Activated B cell treated with CpG ODN at 0.5 μM for 24 hours (primary cell): ENCODE measurements at regions of chr1 and their contacts with region 1.

Region 1: DNA sequence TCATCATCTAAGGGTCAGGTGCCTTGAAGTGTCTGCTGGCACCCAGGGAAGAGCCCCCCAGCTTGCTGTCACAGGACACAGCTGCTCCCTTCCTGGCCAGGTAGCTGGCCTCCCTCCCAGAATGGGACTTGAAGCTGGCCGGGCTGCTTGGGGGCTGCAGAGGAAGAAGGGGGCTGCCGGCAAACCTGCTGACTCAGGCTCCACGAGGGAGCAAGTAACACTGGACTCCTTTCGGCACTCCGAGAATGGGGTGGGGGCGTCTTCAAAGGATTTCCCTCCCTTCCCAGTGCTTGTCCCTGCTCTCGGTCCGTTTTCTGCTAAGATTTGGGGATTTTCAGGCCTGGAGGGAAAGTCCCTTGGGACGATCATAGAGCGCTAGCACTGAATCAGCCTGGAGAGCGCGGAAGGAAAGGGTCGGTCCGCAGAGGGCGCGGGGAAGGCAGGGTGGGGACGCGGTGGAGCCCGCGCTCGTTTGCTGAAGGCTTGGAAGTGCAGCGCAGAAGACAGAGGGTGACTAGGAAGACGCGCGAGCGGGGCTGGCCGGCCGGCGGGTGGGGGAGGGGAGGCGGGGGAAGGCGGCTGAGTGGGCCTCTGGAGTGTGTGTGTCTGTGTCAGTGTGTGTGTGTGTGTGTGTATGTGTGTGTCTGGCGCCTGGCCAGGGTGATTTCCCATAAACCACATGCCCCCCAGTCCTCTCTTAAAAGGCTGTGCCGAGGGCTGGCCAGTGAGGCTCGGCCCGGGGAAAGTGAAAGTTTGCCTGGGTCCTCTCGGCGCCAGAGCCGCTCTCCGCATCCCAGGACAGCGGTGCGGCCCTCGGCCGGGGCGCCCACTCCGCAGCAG is at the start of gene CSF1:
- DNase-seq: peak; percentile 40
- ATAC-seq: peak; percentile 23
- H3K4me3 Mint-ChIP-seq: peak within 1 kb of the TSS; percentile 85
- H3K27ac Mint-ChIP-seq: peak within 1 kb of the TSS; percentile 51
- H3K4me1 Mint-ChIP-seq: peaks cover 37% of the 10 kb centered on the region
- H3K27me3 Mint-ChIP-seq: peaks cover 38% of the 10 kb centered on the region
- CTCF ChIP-seq: no peak
- total RNA-seq, gene CSF1: 1.9 and 2.0 TPM in 2 replicates

Region 2: DNA sequence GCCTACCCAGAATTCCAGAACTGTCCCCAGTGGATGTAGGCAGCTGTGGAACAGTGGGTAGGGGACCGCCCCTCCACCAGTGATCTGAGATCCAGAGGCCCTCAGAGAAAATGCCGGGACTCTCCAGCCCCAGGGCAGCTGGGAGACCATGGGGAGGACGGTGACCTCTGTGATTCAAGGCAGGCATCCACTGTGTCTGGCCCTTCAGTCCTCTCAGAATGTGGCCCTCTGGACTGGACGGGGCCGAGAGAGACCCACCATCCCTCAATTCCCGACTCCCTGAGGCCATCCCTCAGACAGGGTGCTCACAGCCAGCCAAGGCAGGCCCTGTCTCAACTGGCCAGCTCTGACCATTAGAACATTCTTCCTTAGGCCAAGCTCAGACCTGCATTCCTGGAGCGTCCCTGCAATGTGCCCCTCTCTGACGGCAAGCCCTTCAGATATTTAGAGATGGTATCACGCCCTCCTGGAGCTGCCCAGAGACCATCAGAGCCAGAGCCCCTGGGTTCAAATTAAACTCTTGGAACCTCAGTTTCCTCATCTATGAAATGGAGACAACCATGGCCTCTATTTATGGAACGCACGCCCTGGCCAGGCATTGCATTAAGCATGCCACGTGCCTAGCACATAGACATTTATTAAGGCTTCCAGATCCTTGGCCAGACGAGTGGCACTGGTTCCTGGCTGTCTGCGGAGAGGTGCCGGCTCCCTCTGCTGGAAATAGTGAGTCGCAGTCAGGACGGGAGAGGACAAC is 137.0 kb before region 1 on chr1:
- CTCF ChIA-PET with region 1: interaction called, 3 read pairs
- POLR2A ChIA-PET with region 1: no interaction called
- intact Hi-C with region 1: loop called (anchors 2 kb)
- DNase-seq: peak; percentile 37
- ATAC-seq: peak; percentile 81
- H3K4me3 Mint-ChIP-seq: no peak overlapping the region
- H3K27ac Mint-ChIP-seq: no peak overlapping the region
- H3K4me1 Mint-ChIP-seq: peaks cover 3% of the 10 kb centered on the region
- H3K27me3 Mint-ChIP-seq: peaks cover 12% of the 10 kb centered on the region
- CTCF ChIP-seq: no peak

Region 3: GRCh38 chr1:109796484-109797302 is 113.7 kb before region 1 on chr1:
- CTCF ChIA-PET with region 1: no interaction called
- POLR2A ChIA-PET with region 1: no interaction called
- intact Hi-C with region 1: no loop called
- DNase-seq: no peak
- ATAC-seq: no peak
- H3K4me3 Mint-ChIP-seq: no peak overlapping the region
- H3K27ac Mint-ChIP-seq: no peak overlapping the region
- H3K4me1 Mint-ChIP-seq: no peaks in the 10 kb centered on the region
- H3K27me3 Mint-ChIP-seq: peaks cover 7% of the 10 kb centered on the region
- CTCF ChIP-seq: no peak

Region 4: GRCh38 chr1:109816175-109816811 is 94.0 kb before region 1 on chr1:
- CTCF ChIA-PET with region 1: no interaction called
- POLR2A ChIA-PET with region 1: no interaction called
- intact Hi-C with region 1: loop called (anchors 1 kb)
- DNase-seq: no peak
- ATAC-seq: peak; percentile 98
- H3K4me3 Mint-ChIP-seq: peak overlapping the region; percentile 52
- H3K27ac Mint-ChIP-seq: peak overlapping the region; percentile 73
- H3K4me1 Mint-ChIP-seq: peaks cover 44% of the 10 kb centered on the region
- H3K27me3 Mint-ChIP-seq: no peaks in the 10 kb centered on the region
- CTCF ChIP-seq: no peak

Region 5: DNA sequence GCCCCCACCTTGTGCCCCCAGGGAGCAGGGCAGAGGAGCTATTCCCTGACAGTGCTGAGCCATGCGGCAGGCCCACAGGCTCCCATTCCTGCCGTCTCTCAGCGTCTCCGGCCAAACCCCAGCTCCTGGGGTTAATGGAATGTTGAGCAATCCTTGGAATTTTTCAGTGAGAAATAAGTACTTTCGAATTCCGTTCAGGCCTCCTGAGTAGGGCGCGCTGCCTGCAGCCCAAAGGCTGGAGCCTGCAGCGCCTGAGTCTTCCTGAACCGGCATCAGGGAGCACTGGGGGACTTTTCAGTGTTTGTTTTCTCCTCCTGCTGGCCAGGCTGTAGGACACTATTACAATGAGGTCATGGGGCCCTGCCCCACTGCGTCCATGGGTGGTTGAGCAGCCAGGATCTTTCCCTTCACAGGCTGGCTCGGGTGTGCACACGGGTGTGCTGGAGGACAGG is 33.0 kb before region 1 on chr1:
- CTCF ChIA-PET with region 1: no interaction called
- POLR2A ChIA-PET with region 1: no interaction called
- intact Hi-C with region 1: loop called (anchors 5 kb)
- DNase-seq: no peak
- ATAC-seq: peak; percentile 48
- H3K4me3 Mint-ChIP-seq: peak overlapping the region; percentile 46
- H3K27ac Mint-ChIP-seq: no peak overlapping the region
- H3K4me1 Mint-ChIP-seq: peaks cover 22% of the 10 kb centered on the region
- H3K27me3 Mint-ChIP-seq: peaks cover 19% of the 10 kb centered on the region
- CTCF ChIP-seq: no peak

Region 6: DNA sequence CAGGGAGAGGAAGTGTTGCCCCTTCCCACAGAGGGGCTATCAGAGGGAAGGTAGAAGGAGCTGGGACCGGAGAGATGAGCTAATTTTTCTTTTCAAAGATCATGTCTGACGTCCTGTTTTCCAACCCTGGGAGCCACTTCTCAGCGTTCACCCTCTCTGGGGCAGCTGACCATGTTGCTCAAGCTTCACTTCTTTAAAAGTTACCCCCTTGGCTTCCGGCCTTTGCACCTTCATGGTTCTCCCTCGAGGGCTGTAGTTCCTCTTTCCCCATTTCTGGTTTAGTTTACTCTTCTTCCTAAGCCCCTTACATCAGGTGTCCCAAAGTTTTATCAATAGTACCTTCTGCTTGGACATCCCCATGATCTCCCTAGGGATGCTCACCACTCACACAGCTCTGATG is 23.5 kb before region 1 on chr1:
- CTCF ChIA-PET with region 1: no interaction called
- POLR2A ChIA-PET with region 1: interaction called, 5 read pairs
- intact Hi-C with region 1: loop called (anchors 1 kb)
- DNase-seq: no peak
- ATAC-seq: peak; percentile 92
- H3K4me3 Mint-ChIP-seq: peak overlapping the region; percentile 39
- H3K27ac Mint-ChIP-seq: peak overlapping the region; percentile 77
- H3K4me1 Mint-ChIP-seq: peaks cover 60% of the 10 kb centered on the region
- H3K27me3 Mint-ChIP-seq: peaks cover 15% of the 10 kb centered on the region
- CTCF ChIP-seq: no peak

Region 7: GRCh38 chr1:109923131-109923945 is 13.0 kb after region 1 on chr1:
- CTCF ChIA-PET with region 1: no interaction called
- POLR2A ChIA-PET with region 1: no interaction called
- intact Hi-C with region 1: no loop called
- DNase-seq: no peak
- ATAC-seq: no peak
- H3K4me3 Mint-ChIP-seq: no peak overlapping the region
- H3K27ac Mint-ChIP-seq: no peak overlapping the region
- H3K4me1 Mint-ChIP-seq: no peaks in the 10 kb centered on the region
- H3K27me3 Mint-ChIP-seq: peaks cover under 1% of the 10 kb centered on the region
- CTCF ChIP-seq: no peak